ENCODE measurements at regions of chr13 and their contacts with region 1.

Region 1: DNA sequence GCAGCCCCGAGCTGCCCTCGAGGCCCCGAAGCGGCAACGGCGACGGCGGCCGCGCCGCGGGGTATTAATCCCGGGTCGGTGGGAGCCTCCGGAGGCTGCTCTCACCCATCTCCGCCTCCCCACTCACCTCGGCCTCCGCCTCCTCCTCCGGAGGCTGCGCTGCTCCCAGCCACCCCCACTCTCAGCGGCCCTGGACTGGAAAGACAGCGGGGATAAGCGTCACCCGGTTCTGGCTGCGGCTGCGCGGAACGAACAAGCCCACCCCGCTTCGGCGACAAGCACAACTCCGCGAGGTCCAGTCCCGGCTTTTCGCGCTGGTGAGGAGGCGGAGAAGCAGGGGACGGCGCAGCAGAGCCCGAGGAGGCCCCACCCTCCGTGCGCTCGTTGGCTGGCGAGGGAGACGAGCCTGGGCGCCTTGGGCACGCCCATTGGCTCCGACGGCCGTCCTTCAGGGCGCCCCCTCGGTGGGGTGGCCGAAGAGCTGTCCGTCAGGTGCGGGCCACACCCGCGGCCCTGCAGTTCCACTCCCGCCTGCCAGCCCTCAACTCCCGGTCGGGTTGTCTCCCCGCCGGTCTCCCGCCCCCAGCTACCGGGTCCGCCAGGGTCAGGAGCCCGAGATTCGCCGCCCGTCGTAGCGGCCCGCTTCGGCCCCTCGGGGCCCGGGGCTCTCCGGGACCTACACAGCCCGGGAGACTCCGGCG is at the start of gene ZMYM5:
- DNase-seq: peak; percentile 85 to 98 (median 95)
- ATAC-seq: peak; percentile 83
- H3K4me3 ChIP-seq: peak within 1 kb of the TSS; percentile 64 to 74
- H3K4me3 Mint-ChIP-seq: peak within 1 kb of the TSS; percentile 90
- H3K27ac ChIP-seq: peak within 1 kb of the TSS; percentile 78 to 97
- H3K27ac Mint-ChIP-seq: peak within 1 kb of the TSS; percentile 97
- H3K4me1 ChIP-seq: peaks cover 25% of the 10 kb centered on the region
- H3K4me1 Mint-ChIP-seq: peaks cover 35% of the 10 kb centered on the region
- H3K27me3 ChIP-seq: no peaks in the 10 kb centered on the region
- H3K27me3 Mint-ChIP-seq: no peaks in the 10 kb centered on the region
- CTCF ChIP-seq: no peak
- total RNA-seq, gene ZMYM5: 25.1 to 25.8 TPM

Region 2: GRCh38 chr13:19587635-19588300 is 275.7 kb before region 1 on chr13:
- CTCF ChIA-PET with region 1: no interaction called
- POLR2A ChIA-PET with region 1: no interaction called
- intact Hi-C with region 1: loop called in 1 of 2 experiments (anchors 10 kb)
- DNase-seq: peak in 3 of 9 experiments; percentile 16 to 61 (median 47)
- ATAC-seq: peak; percentile 8
- H3K4me3 ChIP-seq: peak overlapping the region in 1 of 2 experiments; percentile 53
- H3K4me3 Mint-ChIP-seq: peak overlapping the region; percentile 78
- H3K27ac ChIP-seq: peak overlapping the region in 1 of 2 experiments; percentile 70
- H3K27ac Mint-ChIP-seq: peak overlapping the region; percentile 87
- H3K4me1 ChIP-seq: peaks cover 19% of the 10 kb centered on the region
- H3K4me1 Mint-ChIP-seq: peaks cover 23% of the 10 kb centered on the region
- H3K27me3 ChIP-seq: peaks cover 0 to 2% of the 10 kb centered on the region in 2 experiments
- H3K27me3 Mint-ChIP-seq: no peaks in the 10 kb centered on the region
- CTCF ChIP-seq: peak; percentile 30

Region 3: GRCh38 chr13:19782049-19782726 is 81.3 kb before region 1 on chr13:
- CTCF ChIA-PET with region 1: interaction called, 3 read pairs
- POLR2A ChIA-PET with region 1: interaction called, 30 read pairs
- intact Hi-C with region 1: loop called (anchors 2 kb)
- DNase-seq: peak; percentile 22 to 73 (median 55)
- ATAC-seq: peak; percentile 54
- H3K4me3 ChIP-seq: peak overlapping the region; percentile 94 to 95
- H3K4me3 Mint-ChIP-seq: peak overlapping the region; percentile 99
- H3K27ac ChIP-seq: peak overlapping the region; percentile 89 to 94
- H3K27ac Mint-ChIP-seq: peak overlapping the region; percentile 99
- H3K4me1 ChIP-seq: no peaks in the 10 kb centered on the region
- H3K4me1 Mint-ChIP-seq: peaks cover 6% of the 10 kb centered on the region
- H3K27me3 ChIP-seq: no peaks in the 10 kb centered on the region
- H3K27me3 Mint-ChIP-seq: no peaks in the 10 kb centered on the region
- CTCF ChIP-seq: no peak

Region 4: GRCh38 chr13:20182231-20182846 is 318.9 kb after region 1 on chr13:
- CTCF ChIA-PET with region 1: no interaction called
- POLR2A ChIA-PET with region 1: no interaction called
- intact Hi-C with region 1: no loop called
- DNase-seq: peak in 8 of 9 experiments; percentile 12 to 84 (median 54)
- ATAC-seq: peak; percentile 100
- H3K4me3 ChIP-seq: no peak overlapping the region
- H3K4me3 Mint-ChIP-seq: no peak overlapping the region
- H3K27ac ChIP-seq: no peak overlapping the region
- H3K27ac Mint-ChIP-seq: no peak overlapping the region
- H3K4me1 ChIP-seq: no peaks in the 10 kb centered on the region
- H3K4me1 Mint-ChIP-seq: peaks cover 3% of the 10 kb centered on the region
- H3K27me3 ChIP-seq: no peaks in the 10 kb centered on the region
- H3K27me3 Mint-ChIP-seq: peaks cover 42% of the 10 kb centered on the region
- CTCF ChIP-seq: peak; percentile 62

Region 5: DNA sequence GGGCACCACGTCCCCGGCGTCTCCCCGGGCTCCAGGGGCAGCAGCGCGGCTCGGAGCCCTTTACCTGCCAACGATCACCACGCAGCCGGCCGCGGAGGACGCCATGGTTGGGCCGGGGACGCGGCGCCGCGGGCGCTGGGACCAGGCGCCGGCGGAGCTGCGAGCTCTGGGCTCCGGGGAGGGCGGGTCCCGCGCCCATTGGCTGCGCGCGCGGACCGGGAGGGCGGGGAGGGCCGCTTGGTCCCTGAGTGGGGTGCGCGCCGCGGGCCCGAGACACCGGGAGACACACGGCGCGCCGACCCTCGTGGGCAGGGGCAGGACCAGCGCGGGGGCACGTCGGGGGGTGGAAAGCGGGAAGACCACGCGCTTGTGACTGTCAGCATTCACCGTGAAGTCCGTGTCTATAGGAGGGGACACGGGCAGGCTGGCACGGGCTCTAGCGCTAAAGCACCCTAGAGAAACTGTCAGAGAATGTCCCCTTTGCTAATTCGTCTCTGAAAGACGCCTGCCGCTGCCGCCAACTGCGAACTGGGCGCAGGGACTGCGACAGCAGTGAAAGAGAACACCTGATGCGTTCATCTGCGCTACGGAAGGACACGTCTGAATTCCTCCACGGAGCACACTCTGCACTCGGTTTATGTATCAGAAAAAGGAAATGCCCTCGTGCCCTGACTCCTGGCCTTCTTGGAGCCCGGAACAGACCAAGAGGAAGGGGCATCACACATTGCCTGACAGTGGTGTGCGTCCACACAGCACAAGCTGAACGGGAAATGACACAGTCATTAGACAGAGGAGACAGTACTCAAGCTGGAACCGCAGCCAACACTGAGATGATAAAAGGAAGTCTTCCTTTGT is 662.4 kb after region 1 on chr13 and contains the start of gene CRYL1:
- CTCF ChIA-PET with region 1: no interaction called
- POLR2A ChIA-PET with region 1: no interaction called
- intact Hi-C with region 1: loop called in 1 of 2 experiments (anchors 10 kb)
- DNase-seq: peak; percentile 46 to 86 (median 74)
- ATAC-seq: peak; percentile 89
- H3K4me3 ChIP-seq: peak within 1 kb of the TSS; percentile 78 to 81
- H3K4me3 Mint-ChIP-seq: peak within 1 kb of the TSS; percentile 96
- H3K27ac ChIP-seq: peak within 1 kb of the TSS; percentile 75 to 87
- H3K27ac Mint-ChIP-seq: peak within 1 kb of the TSS; percentile 96
- H3K4me1 ChIP-seq: peaks cover 17% of the 10 kb centered on the region
- H3K4me1 Mint-ChIP-seq: peaks cover 22% of the 10 kb centered on the region
- H3K27me3 ChIP-seq: no peaks in the 10 kb centered on the region
- H3K27me3 Mint-ChIP-seq: peaks cover 7% of the 10 kb centered on the region
- CTCF ChIP-seq: no peak
- total RNA-seq, gene CRYL1: 8.0 to 8.5 TPM

Region 6: DNA sequence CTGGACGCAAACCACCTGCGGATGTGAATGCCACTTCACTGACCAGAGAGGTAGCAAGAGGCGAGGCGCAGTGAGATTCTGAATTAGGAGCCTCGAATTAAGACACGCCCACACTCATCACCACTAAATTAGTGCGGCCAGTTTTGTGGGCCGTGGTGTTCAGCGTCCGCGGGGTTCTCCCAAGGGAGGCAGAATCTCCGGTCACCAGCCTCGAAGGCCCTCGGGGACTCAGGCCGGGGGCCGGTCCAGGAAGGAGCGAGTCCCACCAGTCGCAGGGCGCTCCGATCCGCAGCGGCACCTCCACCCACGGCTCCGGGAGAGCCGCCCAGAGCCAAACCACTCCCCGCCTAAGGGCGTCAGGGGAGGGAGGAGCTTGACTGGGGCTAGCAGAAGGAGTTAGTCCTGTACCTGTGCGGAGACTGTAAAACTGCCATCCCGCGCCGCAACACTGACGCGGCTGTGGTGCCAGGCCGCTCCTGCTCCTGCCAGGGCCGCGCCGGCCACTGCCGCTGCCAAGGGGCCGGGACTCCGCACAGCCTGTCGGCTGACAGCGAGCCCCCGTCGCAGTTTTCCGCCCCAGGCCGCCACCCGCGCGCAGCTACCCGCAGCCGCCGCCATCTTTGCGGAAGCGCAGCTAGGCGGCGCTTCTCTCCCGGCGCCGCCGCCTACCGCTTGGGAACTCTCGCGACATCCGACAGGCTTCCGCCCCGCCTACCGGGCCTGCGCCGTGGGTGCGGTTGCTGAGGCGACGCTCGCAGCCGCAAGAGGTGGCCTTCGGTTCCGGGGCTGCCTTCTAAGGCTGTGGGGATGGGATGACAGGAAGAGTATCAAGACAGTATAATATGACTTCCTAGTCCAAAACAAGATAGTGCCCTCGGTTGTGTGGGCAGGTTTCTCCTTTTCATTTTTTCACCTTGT is 1740.3 kb after region 1 on chr13 and contains the start of gene MICU2:
- CTCF ChIA-PET with region 1: no interaction called
- POLR2A ChIA-PET with region 1: no interaction called
- intact Hi-C with region 1: loop called (anchors 5 kb)
- DNase-seq: peak; percentile 91 to 98 (median 96)
- ATAC-seq: peak; percentile 92
- H3K4me3 ChIP-seq: peak within 1 kb of the TSS; percentile 73 to 85
- H3K4me3 Mint-ChIP-seq: peak within 1 kb of the TSS; percentile 84
- H3K27ac ChIP-seq: peak within 1 kb of the TSS; percentile 84 to 97
- H3K27ac Mint-ChIP-seq: peak within 1 kb of the TSS; percentile 94
- H3K4me1 ChIP-seq: peaks cover 24% of the 10 kb centered on the region
- H3K4me1 Mint-ChIP-seq: peaks cover 47% of the 10 kb centered on the region
- H3K27me3 ChIP-seq: no peaks in the 10 kb centered on the region
- H3K27me3 Mint-ChIP-seq: peaks cover 9% of the 10 kb centered on the region
- CTCF ChIP-seq: no peak
- total RNA-seq, gene MICU2: 28.3 to 36.0 TPM

Measured in CD8-positive, alpha-beta T cell (primary cell).